Psoas muscle (tissue), 8 donors: ENCODE measurements at regions of chr1 and their contacts with region 1.

Region 1: GRCh38 chr1:205658943-205659581 is 21.2 kb downstream of the SLC45A3 start:
- DNase-seq: peak; percentile 79 to 90
- ATAC-seq: peak; percentile 77 to 91 (median 85)
- H3K4me3 ChIP-seq: peak overlapping the region; percentile 22
- H3K27ac ChIP-seq: no peak overlapping the region
- H3K4me1 ChIP-seq: no peaks in the 10 kb centered on the region
- H3K27me3 ChIP-seq: no peaks in the 10 kb centered on the region
- CTCF ChIP-seq: peak; percentile 83

Region 2: GRCh38 chr1:205528887-205529825 is 129.9 kb before region 1 on chr1:
- intact Hi-C with region 1: loop called (anchors 2 to 5 kb)
- DNase-seq: peak; percentile 85 to 90
- ATAC-seq: peak; percentile 78 to 90 (median 80)
- H3K4me3 ChIP-seq: peak overlapping the region; percentile 55
- H3K27ac ChIP-seq: no peak overlapping the region
- H3K4me1 ChIP-seq: no peaks in the 10 kb centered on the region
- H3K27me3 ChIP-seq: no peaks in the 10 kb centered on the region
- CTCF ChIP-seq: peak; percentile 91

Region 3: GRCh38 chr1:205610036-205610435 is 49.0 kb before region 1 on chr1:
- intact Hi-C with region 1: no loop called
- DNase-seq: no peak
- ATAC-seq: no peak
- H3K4me3 ChIP-seq: no peak overlapping the region
- H3K27ac ChIP-seq: no peak overlapping the region
- H3K4me1 ChIP-seq: peaks cover 5% of the 10 kb centered on the region
- H3K27me3 ChIP-seq: no peaks in the 10 kb centered on the region
- CTCF ChIP-seq: no peak

Region 4: GRCh38 chr1:205711104-205712020 is 52.3 kb after region 1 on chr1:
- intact Hi-C with region 1: loop called (anchors 1 to 5 kb)
- DNase-seq: no peak
- ATAC-seq: peak; percentile 79 to 87 (median 82)
- H3K4me3 ChIP-seq: no peak overlapping the region
- H3K27ac ChIP-seq: peak overlapping the region; percentile 44
- H3K4me1 ChIP-seq: peaks cover 4% of the 10 kb centered on the region
- H3K27me3 ChIP-seq: no peaks in the 10 kb centered on the region
- CTCF ChIP-seq: peak; percentile 87